ENCODE measurements at regions of chr2 and their contacts with region 1.

Region 1: GRCh38 chr2:21175895-21176646 is 52.3 kb downstream of the TDRD15 start:
- DNase-seq: no peak
- ATAC-seq: no peak
- H3K4me3 ChIP-seq: peak overlapping the region; percentile 18 to 26
- H3K27ac ChIP-seq: peak overlapping the region in 1 of 2 donors; percentile 57
- H3K4me1 ChIP-seq: no peaks in the 10 kb centered on the region
- H3K27me3 ChIP-seq: no peaks in the 10 kb centered on the region

Region 2: GRCh38 chr2:21231985-21232384 is 55.9 kb after region 1 on chr2:
- intact Hi-C with region 1: no loop called
- DNase-seq: no peak
- ATAC-seq: peak; percentile 16
- H3K4me3 ChIP-seq: no peak overlapping the region
- H3K27ac ChIP-seq: no peak overlapping the region
- H3K4me1 ChIP-seq: peaks cover 0 to 5% of the 10 kb centered on the region in 2 donors
- H3K27me3 ChIP-seq: no peaks in the 10 kb centered on the region

Region 3: DNA sequence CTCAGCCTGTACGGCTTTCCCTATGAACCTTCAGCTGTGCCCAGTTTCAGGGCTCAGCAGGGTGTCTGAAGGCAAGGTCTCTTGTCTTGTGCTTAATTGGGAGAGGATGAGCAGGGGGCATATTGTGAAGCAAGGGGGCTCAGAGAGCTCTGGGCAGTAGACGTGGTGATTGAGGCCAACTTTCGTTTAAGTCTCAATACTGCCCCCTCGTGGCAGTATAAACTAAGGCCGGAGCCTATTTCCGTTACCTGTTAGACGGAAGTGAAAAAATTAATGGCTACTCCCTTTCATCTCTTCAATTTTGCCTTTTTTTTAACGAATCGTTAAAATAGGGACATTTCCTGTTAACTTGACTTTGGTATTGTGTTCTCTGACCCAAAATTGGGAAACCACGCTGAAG is 141.1 kb after region 1 on chr2:
- intact Hi-C with region 1: loop called (anchors 2 kb)
- DNase-seq: peak in 1 of 2 donors; percentile 54
- ATAC-seq: no peak
- H3K4me3 ChIP-seq: no peak overlapping the region
- H3K27ac ChIP-seq: no peak overlapping the region
- H3K4me1 ChIP-seq: peaks cover 0 to 4% of the 10 kb centered on the region in 2 donors
- H3K27me3 ChIP-seq: no peaks in the 10 kb centered on the region

Measured in aorta (tissue), 5 donors.